ENCODE measurements at regions of chr5 and their contacts with region 1.

Region 1: DNA sequence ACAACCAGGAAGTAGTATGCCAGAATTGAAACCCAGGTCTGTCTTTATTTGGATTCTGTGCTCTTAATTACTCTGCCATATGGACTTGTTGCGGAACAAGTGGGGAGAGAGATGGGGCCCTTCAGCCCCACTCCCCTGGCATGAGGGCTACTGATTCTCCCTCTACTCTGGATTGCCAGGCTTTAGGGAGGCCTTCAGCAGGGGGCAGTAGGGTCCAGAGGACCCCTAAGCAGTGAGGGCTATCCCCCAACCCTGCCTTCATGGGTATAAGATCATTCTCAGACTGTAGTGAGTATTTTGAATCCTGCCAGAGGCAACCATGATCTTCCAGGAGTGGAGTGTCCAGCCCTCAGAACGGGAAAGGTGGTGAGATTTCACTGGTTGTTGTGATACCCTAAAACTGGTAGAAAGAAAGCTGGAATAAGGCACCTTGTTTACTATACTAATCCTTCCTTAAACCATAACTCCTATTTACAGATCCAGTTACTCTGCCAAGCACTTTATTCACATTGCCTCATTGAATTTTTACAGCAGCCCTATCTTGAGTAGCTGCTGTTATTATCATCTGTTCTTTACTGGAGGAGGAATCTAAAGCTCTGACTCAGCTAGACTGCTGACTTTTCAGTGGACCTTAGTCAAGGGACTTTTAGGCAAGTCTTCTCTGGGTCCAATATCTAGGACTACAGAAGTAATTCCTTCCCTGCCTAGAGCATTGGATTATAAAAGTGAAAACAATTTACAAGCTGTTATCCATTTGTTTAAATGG is 31.3 kb upstream of the LARP1 start:
- DNase-seq: no peak
- H3K4me3 ChIP-seq: no peak overlapping the region
- H3K27ac ChIP-seq: no peak overlapping the region
- H3K4me1 ChIP-seq: no peaks in the 10 kb centered on the region
- CTCF ChIP-seq: no peak

Region 2: GRCh38 chr5:154461531-154461930 is 262.4 kb before region 1 on chr5:
- CTCF ChIA-PET with region 1: no interaction called
- POLR2A ChIA-PET with region 1: no interaction called
- intact Hi-C with region 1: no loop called
- DNase-seq: no peak
- H3K4me3 ChIP-seq: no peak overlapping the region
- H3K27ac ChIP-seq: no peak overlapping the region
- H3K4me1 ChIP-seq: no peaks in the 10 kb centered on the region
- CTCF ChIP-seq: no peak

Region 3: GRCh38 chr5:154593071-154593470 is 130.9 kb before region 1 on chr5:
- CTCF ChIA-PET with region 1: no interaction called
- POLR2A ChIA-PET with region 1: no interaction called
- intact Hi-C with region 1: no loop called
- DNase-seq: no peak
- H3K4me3 ChIP-seq: no peak overlapping the region
- H3K27ac ChIP-seq: no peak overlapping the region
- H3K4me1 ChIP-seq: no peaks in the 10 kb centered on the region
- CTCF ChIP-seq: no peak

Region 4: GRCh38 chr5:154740483-154740882 is 16.6 kb after region 1 on chr5:
- CTCF ChIA-PET with region 1: no interaction called
- POLR2A ChIA-PET with region 1: interaction called, 10 read pairs
- intact Hi-C with region 1: no loop called
- DNase-seq: no peak
- H3K4me3 ChIP-seq: no peak overlapping the region
- H3K27ac ChIP-seq: no peak overlapping the region
- H3K4me1 ChIP-seq: no peaks in the 10 kb centered on the region
- CTCF ChIP-seq: no peak